ENCODE measurements at regions of chr10 and their contacts with region 1.

Region 1: DNA sequence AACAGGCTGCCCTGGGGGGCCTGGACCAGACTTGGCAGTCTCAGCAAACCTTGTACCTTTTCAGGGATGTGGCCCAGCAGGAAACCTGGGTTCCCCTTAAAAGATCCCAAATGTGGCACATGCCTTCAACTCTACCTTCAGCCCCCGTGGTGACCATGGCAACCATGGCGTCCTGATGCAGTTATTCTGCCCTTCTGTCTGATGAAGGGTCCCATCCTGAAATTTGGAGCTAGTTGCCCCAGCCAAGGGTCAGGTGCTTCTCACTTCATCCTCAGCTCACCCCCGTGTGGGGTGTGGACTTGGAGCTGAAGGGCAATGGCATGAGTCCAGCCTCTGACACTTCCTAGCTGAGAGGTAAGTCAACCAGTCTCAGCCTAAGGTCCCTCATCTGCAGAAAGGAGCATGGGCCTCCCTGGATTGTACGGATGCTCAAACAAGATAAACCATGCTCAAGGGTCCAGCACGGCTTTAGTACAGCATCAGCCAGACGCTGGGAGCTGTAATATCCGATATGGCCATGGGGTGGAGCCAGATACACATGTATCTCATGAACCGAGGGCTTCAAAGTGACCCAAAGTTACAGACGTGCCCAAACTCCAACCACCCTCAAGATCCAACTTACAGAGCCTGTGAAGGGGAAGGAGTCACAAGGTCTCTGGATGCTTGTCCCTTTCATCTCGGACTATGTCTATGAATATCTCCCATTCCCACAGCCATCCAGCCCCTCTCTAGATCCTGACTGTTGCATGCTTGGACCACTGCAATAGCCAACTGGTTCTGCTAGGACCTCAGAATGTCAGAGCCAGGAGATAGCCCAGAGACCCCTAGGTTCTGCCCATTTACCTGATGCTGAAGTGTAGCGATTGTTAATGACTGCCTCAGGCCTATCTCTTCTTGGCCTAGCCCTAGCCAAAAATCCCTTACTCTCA is 142.5 kb downstream of the SH3PXD2A start:
- DNase-seq: peak; percentile 85 to 99 (median 88)
- H3K4me3 ChIP-seq: no peak overlapping the region
- H3K27ac ChIP-seq: peak overlapping the region in 54 of 59 donors; percentile 2 to 99 (median 93)
- H3K27me3 ChIP-seq: no peaks in the 10 kb centered on the region
- CTCF ChIP-seq: peak; percentile 85 to 99 (median 96)

Region 2: GRCh38 chr10:103759100-103759781 is 46.4 kb after region 1 on chr10:
- intact Hi-C with region 1: loop called in 1 of 2 experiments (anchors 5 kb)
- DNase-seq: peak; percentile 41 to 93 (median 70)
- H3K4me3 ChIP-seq: peak overlapping the region in 9 of 59 donors; percentile 3 to 21 (median 13)
- H3K27ac ChIP-seq: peak overlapping the region; percentile 44 to 96 (median 82)
- H3K27me3 ChIP-seq: no peaks in the 10 kb centered on the region
- CTCF ChIP-seq: no peak

Region 3: GRCh38 chr10:103859161-103860086 is 146.6 kb after region 1 on chr10:
- intact Hi-C with region 1: loop called (anchors 1 to 2 kb)
- DNase-seq: peak in 5 of 10 donors; percentile 43 to 76 (median 71)
- H3K4me3 ChIP-seq: no peak overlapping the region
- H3K27ac ChIP-seq: peak overlapping the region in 28 of 59 donors; percentile 2 to 86 (median 50)
- H3K27me3 ChIP-seq: no peaks in the 10 kb centered on the region
- CTCF ChIP-seq: peak; percentile 53 to 94 (median 82)

Region 4: GRCh38 chr10:103888113-103888841 is 175.4 kb after region 1 on chr10:
- intact Hi-C with region 1: loop called in 1 of 2 experiments (anchors 2 kb)
- DNase-seq: peak in 1 of 10 donors; percentile 16
- H3K4me3 ChIP-seq: no peak overlapping the region
- H3K27ac ChIP-seq: peak overlapping the region in 44 of 59 donors; percentile 8 to 81 (median 58)
- H3K27me3 ChIP-seq: no peaks in the 10 kb centered on the region
- CTCF ChIP-seq: peak; percentile 61 to 95 (median 86)

Measured in dorsolateral prefrontal cortex (tissue), 120 donors.